Head of caudate nucleus (tissue), 42 donors: ENCODE measurements at regions of chr7 and their contacts with region 1.

Region 1: DNA sequence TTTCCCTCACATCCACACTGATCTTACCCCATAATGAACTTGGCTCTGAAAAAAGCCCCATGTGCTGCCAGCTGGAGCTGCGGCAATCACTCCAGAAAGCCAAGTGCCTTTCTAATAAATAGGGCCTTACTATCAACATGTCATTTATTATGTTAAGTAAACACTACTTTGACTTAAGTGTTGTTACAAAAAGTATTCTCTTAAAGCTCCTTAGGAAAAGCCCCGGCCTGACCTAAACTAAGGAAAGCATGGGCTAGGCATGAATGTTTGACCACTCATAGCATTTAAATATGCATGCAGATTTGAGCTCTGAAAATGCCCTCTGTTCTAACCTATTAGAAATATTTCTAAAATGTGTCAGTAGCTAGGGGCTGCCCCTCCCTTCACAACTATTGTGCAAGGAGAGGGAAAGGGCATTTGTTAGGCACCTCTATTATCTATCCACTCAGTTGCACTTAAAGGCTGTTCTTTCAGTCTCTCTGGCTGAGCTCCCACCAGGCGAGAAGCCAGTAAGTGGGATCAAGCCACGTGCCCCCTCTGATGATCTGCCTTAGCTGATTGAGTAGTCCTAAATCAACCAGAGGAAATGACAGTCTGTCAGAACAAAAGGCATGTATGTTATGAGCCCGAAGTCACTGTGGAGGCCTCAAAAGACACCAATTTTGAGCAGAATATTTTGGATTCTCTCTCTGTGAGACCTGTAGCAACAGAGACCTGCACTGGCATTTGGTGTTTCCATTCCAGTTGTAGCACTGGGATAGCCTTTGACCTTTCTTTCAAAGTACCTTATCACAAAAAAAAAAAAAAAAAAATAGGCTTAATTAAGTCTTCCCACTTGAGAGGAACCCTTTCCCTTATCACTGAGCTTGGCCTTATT is 77.1 kb downstream of the ITGB8 start:
- DNase-seq: peak in 7 of 42 donors; percentile 9 to 56 (median 33)

Region 2: DNA sequence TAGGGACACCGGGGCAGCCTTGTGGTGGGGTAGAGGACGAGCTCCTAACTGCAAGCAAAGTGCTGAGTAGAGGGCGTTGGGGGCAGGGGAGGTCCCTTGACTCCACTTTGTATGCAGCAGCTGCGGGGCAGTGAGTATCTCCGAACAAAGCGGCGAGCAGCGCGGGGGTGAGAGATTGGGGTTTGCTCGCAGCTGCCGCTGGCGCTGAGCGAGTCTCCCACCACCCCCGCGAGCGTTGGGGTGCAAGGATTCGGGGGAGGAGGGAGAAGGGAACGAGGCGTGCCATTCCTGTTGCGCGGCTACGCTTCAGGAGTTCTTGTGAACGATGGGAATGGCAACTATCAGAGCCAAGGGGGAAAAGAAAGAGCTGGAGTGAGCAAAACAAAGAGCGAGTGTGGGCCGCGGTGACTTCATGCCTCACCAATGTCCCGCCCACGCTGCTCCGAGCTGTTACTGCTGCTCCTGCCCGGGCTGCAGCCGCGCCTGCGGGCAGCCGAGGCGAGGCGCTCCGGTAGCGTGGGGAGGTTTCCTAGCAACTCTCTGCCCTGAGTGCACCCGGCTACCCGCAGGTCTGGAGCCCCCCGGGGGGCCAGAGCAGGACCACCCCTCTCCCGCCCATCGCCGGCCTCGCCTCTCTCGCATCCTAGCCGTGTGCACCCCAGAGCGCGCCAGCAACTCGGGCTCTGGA is 77.4 kb before region 1 on chr7 and contains the start of gene ITGB8:
- intact Hi-C with region 1: loop called (anchors 5 kb)
- DNase-seq: peak; percentile 86 to 98 (median 94)